Heart left ventricle (tissue), 16 donors: ENCODE measurements at regions of chr4 and their contacts with region 1.

Region 1: GRCh38 chr4:105146276-105147015 is at the start of gene TET2:
- DNase-seq: peak; percentile 80 to 91 (median 84)
- ATAC-seq: peak; percentile 84 to 95 (median 92)
- H3K4me3 ChIP-seq: peak within 1 kb of the TSS; percentile 74 to 93 (median 79)
- H3K27ac ChIP-seq: peak within 1 kb of the TSS; percentile 76 to 97 (median 86)
- H3K4me1 ChIP-seq: peaks cover 0 to 48% (median 26%) of the 10 kb centered on the region in 12 donors
- H3K27me3 ChIP-seq: no peaks in the 10 kb centered on the region
- CTCF ChIP-seq: peak in 1 of 12 donors; percentile 16
- POLR2A ChIP-seq: peak in 1 of 2 donors; percentile 74
- total RNA-seq, gene TET2: 9.5 to 25.6 (median 15.4) TPM

Region 2: GRCh38 chr4:105191621-105192210 is 45.3 kb after region 1 on chr4:
- intact Hi-C with region 1: loop called in 8 of 10 experiments (anchors 2 to 5 kb)
- DNase-seq: no peak
- ATAC-seq: peak in 3 of 4 donors; percentile 57 to 71 (median 62)
- H3K4me3 ChIP-seq: peak overlapping the region in 1 of 12 donors; percentile 5
- H3K27ac ChIP-seq: peak overlapping the region in 9 of 12 donors; percentile 1 to 48 (median 18)
- H3K4me1 ChIP-seq: peaks cover 0 to 77% (median 48%) of the 10 kb centered on the region in 12 donors
- H3K27me3 ChIP-seq: no peaks in the 10 kb centered on the region
- CTCF ChIP-seq: no peak
- POLR2A ChIP-seq: no peak

Region 3: GRCh38 chr4:105246712-105247111 is 100.3 kb after region 1 on chr4:
- intact Hi-C with region 1: loop called in 4 of 10 experiments (anchors 5 to 10 kb)
- DNase-seq: no peak
- ATAC-seq: peak in 3 of 4 donors; percentile 44 to 68 (median 53)
- H3K4me3 ChIP-seq: no peak overlapping the region
- H3K27ac ChIP-seq: no peak overlapping the region
- H3K4me1 ChIP-seq: peaks cover 0 to 13% (median 2%) of the 10 kb centered on the region in 12 donors
- H3K27me3 ChIP-seq: no peaks in the 10 kb centered on the region
- CTCF ChIP-seq: no peak
- POLR2A ChIP-seq: no peak

Region 4: GRCh38 chr4:105274504-105274903 is 128.1 kb after region 1 on chr4:
- intact Hi-C with region 1: loop called in 2 of 10 experiments (anchors 10 kb)
- DNase-seq: no peak
- ATAC-seq: no peak
- H3K4me3 ChIP-seq: no peak overlapping the region
- H3K27ac ChIP-seq: no peak overlapping the region
- H3K4me1 ChIP-seq: no peaks in the 10 kb centered on the region
- H3K27me3 ChIP-seq: no peaks in the 10 kb centered on the region
- CTCF ChIP-seq: no peak
- POLR2A ChIP-seq: no peak

Region 5: GRCh38 chr4:105369988-105370387 is 223.5 kb after region 1 on chr4:
- intact Hi-C with region 1: loop called in 3 of 10 experiments (anchors 10 kb)
- DNase-seq: no peak
- ATAC-seq: no peak
- H3K4me3 ChIP-seq: no peak overlapping the region
- H3K27ac ChIP-seq: no peak overlapping the region
- H3K4me1 ChIP-seq: peaks cover 0 to 17% (median 0%) of the 10 kb centered on the region in 12 donors
- H3K27me3 ChIP-seq: no peaks in the 10 kb centered on the region
- CTCF ChIP-seq: no peak
- POLR2A ChIP-seq: no peak

Region 6: GRCh38 chr4:105471566-105472176 is 325.2 kb after region 1 on chr4:
- intact Hi-C with region 1: loop called in 9 of 10 experiments (anchors 1 to 5 kb)
- DNase-seq: peak in 4 of 5 donors; percentile 53 to 72 (median 66)
- ATAC-seq: peak; percentile 41 to 63 (median 45)
- H3K4me3 ChIP-seq: peak overlapping the region in 10 of 12 donors; percentile 70 to 98 (median 92)
- H3K27ac ChIP-seq: peak overlapping the region in 11 of 12 donors; percentile 11 to 100 (median 99)
- H3K4me1 ChIP-seq: peaks cover 0 to 51% (median 35%) of the 10 kb centered on the region in 12 donors
- H3K27me3 ChIP-seq: no peaks in the 10 kb centered on the region
- CTCF ChIP-seq: peak; percentile 61 to 82 (median 74)
- POLR2A ChIP-seq: no peak

Region 7: DNA sequence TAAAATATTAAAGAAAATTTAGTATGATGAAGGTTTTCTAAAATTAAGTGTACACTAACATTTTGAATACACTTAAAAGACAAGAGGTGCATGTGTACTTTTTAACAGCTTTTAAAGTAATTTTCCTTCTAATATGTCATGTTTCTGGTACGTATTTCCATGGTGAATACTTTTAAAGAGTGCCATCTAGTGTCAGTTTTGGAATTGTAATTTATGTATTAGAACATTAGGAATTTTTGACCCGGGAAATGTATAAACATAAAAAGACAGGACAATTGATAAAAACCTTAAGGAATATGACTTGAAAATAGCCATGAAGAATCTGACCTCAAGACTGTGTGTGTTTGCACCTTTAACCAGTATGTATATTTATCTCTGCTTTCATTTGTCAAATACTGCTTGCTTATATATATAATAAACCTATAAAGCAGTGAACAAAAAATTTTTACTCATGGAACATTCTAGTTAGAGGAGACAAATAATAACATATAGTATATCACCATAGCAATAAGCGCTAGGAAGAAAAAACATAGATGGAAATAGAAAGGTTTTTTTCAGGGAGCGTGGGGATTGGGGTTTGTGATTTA is 569.3 kb after region 1 on chr4:
- intact Hi-C with region 1: loop called in 2 of 10 experiments (anchors 10 kb)
- DNase-seq: no peak
- ATAC-seq: no peak
- H3K4me3 ChIP-seq: peak overlapping the region in 4 of 12 donors; percentile 6 to 27 (median 19)
- H3K27ac ChIP-seq: no peak overlapping the region
- H3K4me1 ChIP-seq: peaks cover 0 to 18% (median 0%) of the 10 kb centered on the region in 12 donors
- H3K27me3 ChIP-seq: no peaks in the 10 kb centered on the region
- CTCF ChIP-seq: peak; percentile 34 to 71 (median 52)
- POLR2A ChIP-seq: no peak